Ovary (tissue), 10 donors: ENCODE measurements at regions of chr10 and their contacts with region 1.

Region 1: GRCh38 chr10:45023426-45023825 is 22.7 kb downstream of the ZNF22 start:
- DNase-seq: no peak
- H3K4me3 ChIP-seq: no peak overlapping the region
- H3K27ac ChIP-seq: no peak overlapping the region
- H3K4me1 ChIP-seq: no peaks in the 10 kb centered on the region
- H3K27me3 ChIP-seq: no peaks in the 10 kb centered on the region
- CTCF ChIP-seq: no peak
- EP300 ChIP-seq: no peak
- POLR2A ChIP-seq: no peak

Region 2: GRCh38 chr10:43765516-43765915 is 1257.9 kb before region 1 on chr10:
- intact Hi-C with region 1: loop called in 1 of 4 experiments (anchors 5 kb)
- DNase-seq: no peak
- H3K4me3 ChIP-seq: no peak overlapping the region
- H3K27ac ChIP-seq: no peak overlapping the region
- H3K4me1 ChIP-seq: no peaks in the 10 kb centered on the region
- H3K27me3 ChIP-seq: no peaks in the 10 kb centered on the region
- CTCF ChIP-seq: no peak
- EP300 ChIP-seq: no peak
- POLR2A ChIP-seq: no peak

Region 3: GRCh38 chr10:45082176-45082575 is 58.8 kb after region 1 on chr10:
- intact Hi-C with region 1: no loop called
- DNase-seq: no peak
- H3K4me3 ChIP-seq: no peak overlapping the region
- H3K27ac ChIP-seq: no peak overlapping the region
- H3K4me1 ChIP-seq: no peaks in the 10 kb centered on the region
- H3K27me3 ChIP-seq: no peaks in the 10 kb centered on the region
- CTCF ChIP-seq: no peak
- EP300 ChIP-seq: no peak
- POLR2A ChIP-seq: no peak